Endothelial cell of umbilical vein (primary cell): ENCODE measurements at regions of chr3 and their contacts with region 1.

Region 1: GRCh38 chr3:184874709-184875644 is 63.0 kb downstream of the VPS8 start:
- DNase-seq: peak; percentile 52
- H3K4me3 ChIP-seq: no peak overlapping the region
- H3K27ac ChIP-seq: no peak overlapping the region
- H3K4me1 ChIP-seq: no peaks in the 10 kb centered on the region
- H3K27me3 ChIP-seq: no peaks in the 10 kb centered on the region
- CTCF ChIP-seq: peak; percentile 36 to 40
- POLR2A ChIP-seq: no peak

Region 2: GRCh38 chr3:184568924-184569829 is 305.8 kb before region 1 on chr3:
- CTCF ChIA-PET with region 1: no interaction called
- POLR2A ChIA-PET with region 1: no interaction called
- dilution Hi-C with region 1: no loop called
- intact Hi-C with region 1: no loop called
- DNase-seq: peak; percentile 14
- H3K4me3 ChIP-seq: peak overlapping the region in 2 of 3 experiments; percentile 19 to 26
- H3K27ac ChIP-seq: no peak overlapping the region
- H3K4me1 ChIP-seq: no peaks in the 10 kb centered on the region
- H3K27me3 ChIP-seq: peaks cover 21 to 31% of the 10 kb centered on the region in 2 experiments
- CTCF ChIP-seq: no peak
- POLR2A ChIP-seq: no peak

Region 3: GRCh38 chr3:184965639-184966430 is 90.9 kb after region 1 on chr3:
- CTCF ChIA-PET with region 1: no interaction called
- POLR2A ChIA-PET with region 1: no interaction called
- dilution Hi-C with region 1: no loop called
- intact Hi-C with region 1: no loop called
- DNase-seq: no peak
- H3K4me3 ChIP-seq: no peak overlapping the region
- H3K27ac ChIP-seq: no peak overlapping the region
- H3K4me1 ChIP-seq: no peaks in the 10 kb centered on the region
- H3K27me3 ChIP-seq: no peaks in the 10 kb centered on the region
- CTCF ChIP-seq: no peak
- POLR2A ChIP-seq: no peak

Region 4: DNA sequence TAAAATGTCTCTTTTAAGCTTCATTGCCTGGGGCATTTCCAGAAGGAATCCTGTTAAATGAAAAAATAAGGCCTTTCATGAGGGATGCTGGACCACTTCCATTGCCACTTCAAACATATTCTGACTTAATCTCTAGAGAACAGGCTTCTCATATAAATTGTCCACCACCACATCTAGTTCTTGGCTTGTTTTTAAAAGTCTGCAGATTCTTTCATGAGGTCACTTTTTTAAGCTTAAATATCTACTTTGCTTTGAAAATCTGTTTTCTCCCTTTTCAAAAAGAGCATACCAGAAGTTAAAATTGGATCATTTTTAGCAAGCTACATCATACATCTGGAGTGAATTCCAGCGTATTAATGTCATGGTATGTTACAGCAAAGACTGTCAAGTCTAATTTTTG is 146.3 kb after region 1 on chr3:
- CTCF ChIA-PET with region 1: no interaction called
- POLR2A ChIA-PET with region 1: no interaction called
- dilution Hi-C with region 1: no loop called
- intact Hi-C with region 1: loop called (anchors 5 kb)
- DNase-seq: no peak
- H3K4me3 ChIP-seq: no peak overlapping the region
- H3K27ac ChIP-seq: no peak overlapping the region
- H3K4me1 ChIP-seq: peaks cover 4% of the 10 kb centered on the region
- H3K27me3 ChIP-seq: no peaks in the 10 kb centered on the region
- CTCF ChIP-seq: no peak
- POLR2A ChIP-seq: no peak

Region 5: GRCh38 chr3:185070491-185071286 is 195.7 kb after region 1 on chr3:
- CTCF ChIA-PET with region 1: interaction called, 30 read pairs
- POLR2A ChIA-PET with region 1: no interaction called
- dilution Hi-C with region 1: no loop called
- intact Hi-C with region 1: loop called (anchors 1 kb)
- DNase-seq: peak; percentile 18
- H3K4me3 ChIP-seq: no peak overlapping the region
- H3K27ac ChIP-seq: no peak overlapping the region
- H3K4me1 ChIP-seq: no peaks in the 10 kb centered on the region
- H3K27me3 ChIP-seq: no peaks in the 10 kb centered on the region
- CTCF ChIP-seq: peak; percentile 29 to 55
- POLR2A ChIP-seq: no peak

Region 6: DNA sequence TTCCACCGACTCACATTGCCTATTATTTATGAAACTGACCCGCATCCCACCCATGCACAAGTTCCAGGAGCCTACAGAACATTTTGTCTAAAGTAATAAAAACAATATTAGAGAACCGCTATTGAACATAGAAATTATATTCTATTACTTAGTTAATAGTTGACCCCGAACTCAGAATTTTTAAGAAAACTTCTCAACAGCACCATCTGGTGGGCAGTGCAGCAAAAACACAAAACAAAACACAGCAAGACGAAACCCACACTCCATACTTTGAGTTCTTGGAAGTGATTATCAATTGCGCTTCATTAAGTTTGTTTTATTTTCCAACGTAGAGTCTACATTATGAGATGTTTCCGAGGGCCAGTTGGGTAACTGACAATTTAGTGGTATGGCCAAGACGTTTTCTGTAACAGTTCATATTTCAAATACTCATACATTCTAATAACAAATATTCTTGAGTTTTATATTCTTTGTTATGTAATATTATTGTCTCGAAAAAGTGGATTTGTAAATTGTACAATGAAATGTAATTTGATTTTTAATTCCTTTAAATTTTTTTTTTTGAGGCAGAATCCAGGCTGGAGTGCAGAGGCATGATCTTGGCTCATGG is 301.9 kb after region 1 on chr3:
- CTCF ChIA-PET with region 1: interaction called, 121 read pairs
- POLR2A ChIA-PET with region 1: no interaction called
- dilution Hi-C with region 1: loop called (anchors 25 kb)
- intact Hi-C with region 1: loop called (anchors 1 kb)
- DNase-seq: peak; percentile 48
- H3K4me3 ChIP-seq: no peak overlapping the region
- H3K27ac ChIP-seq: no peak overlapping the region
- H3K4me1 ChIP-seq: no peaks in the 10 kb centered on the region
- H3K27me3 ChIP-seq: peaks cover 3 to 5% of the 10 kb centered on the region in 2 experiments
- CTCF ChIP-seq: peak; percentile 46 to 60
- POLR2A ChIP-seq: no peak

Region 7: DNA sequence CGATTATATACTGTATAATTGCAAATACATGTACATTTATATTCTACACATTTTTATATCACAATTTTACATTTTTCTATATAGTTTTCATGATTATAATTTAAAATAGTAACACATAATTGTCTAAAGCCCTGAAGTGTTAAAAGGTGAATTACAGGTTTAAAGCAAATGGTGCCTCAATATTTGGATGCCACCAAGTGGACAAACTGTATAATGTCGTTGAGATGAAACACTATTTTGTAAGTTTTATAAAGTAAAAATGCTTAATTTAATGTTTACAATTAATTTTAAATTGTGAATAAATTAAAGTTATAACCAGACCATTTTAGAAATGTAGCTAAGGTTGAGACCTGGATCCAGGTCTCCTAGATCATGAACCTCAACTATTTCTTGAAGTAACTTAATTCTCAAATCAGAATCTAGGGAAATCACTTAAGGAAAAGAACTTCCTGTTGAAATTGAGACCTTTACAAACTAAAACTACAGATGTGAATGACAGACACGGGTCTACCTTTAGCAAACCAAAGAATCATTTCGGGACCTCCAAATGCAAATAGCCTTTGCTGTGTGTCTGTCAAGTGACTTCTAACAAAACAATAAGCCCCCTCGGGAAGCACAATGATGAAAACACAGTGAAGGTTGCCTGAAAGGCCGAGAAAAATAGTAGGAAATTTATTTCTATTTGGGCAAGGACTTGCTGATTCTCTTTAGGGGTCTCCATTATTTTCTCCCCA is 341.1 kb after region 1 on chr3:
- CTCF ChIA-PET with region 1: no interaction called
- POLR2A ChIA-PET with region 1: interaction called, 4 read pairs
- dilution Hi-C with region 1: no loop called
- intact Hi-C with region 1: loop called (anchors 1 kb)
- DNase-seq: peak; percentile 55
- H3K4me3 ChIP-seq: peak overlapping the region in 2 of 3 experiments; percentile 4 to 27
- H3K27ac ChIP-seq: no peak overlapping the region
- H3K4me1 ChIP-seq: peaks cover 6% of the 10 kb centered on the region
- H3K27me3 ChIP-seq: no peaks in the 10 kb centered on the region
- CTCF ChIP-seq: peak; percentile 19 to 27
- POLR2A ChIP-seq: no peak

Region 8: DNA sequence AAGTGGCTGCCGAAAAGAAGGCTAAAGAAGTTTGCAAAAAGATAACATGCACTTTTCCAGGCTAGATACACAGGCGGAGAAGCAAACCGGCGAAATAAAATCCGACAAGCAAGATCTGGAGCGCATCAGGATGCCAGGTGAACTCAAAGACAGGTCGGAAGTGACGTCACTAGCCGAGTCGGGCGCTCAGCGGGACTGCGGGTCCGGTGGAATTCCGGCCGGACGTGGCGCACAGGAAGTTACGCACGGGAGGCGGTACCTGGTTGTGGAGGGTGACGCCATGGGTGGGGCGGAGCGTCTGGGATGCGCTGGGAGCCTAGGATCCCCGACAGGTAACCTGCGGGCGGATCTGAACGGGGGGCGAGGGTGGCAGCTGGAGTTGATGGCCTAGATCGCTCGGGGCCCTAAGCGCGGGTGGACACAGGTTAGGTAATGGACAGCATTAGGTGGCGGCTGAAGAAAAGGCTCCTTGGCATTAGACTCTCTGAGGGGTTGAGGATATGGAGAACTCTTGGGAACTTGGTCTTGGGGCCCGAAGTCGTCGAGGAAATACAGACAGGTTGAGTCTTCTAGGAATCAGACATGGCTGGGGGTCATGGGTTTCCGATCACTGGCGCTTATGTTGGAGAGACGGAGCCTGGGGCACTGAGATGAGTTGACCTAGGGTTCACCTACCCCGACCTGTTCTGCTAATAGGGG is 407.9 kb after region 1 on chr3:
- CTCF ChIA-PET with region 1: interaction called, 6 read pairs
- POLR2A ChIA-PET with region 1: no interaction called
- dilution Hi-C with region 1: no loop called
- intact Hi-C with region 1: loop called (anchors 1 kb)
- DNase-seq: peak; percentile 88
- H3K4me3 ChIP-seq: peak overlapping the region; percentile 41 to 77 (median 57)
- H3K27ac ChIP-seq: peak overlapping the region; percentile 54
- H3K4me1 ChIP-seq: peaks cover 9% of the 10 kb centered on the region
- H3K27me3 ChIP-seq: peaks cover 0 to 2% of the 10 kb centered on the region in 2 experiments
- CTCF ChIP-seq: no peak
- POLR2A ChIP-seq: peak; percentile 70

Region 9: DNA sequence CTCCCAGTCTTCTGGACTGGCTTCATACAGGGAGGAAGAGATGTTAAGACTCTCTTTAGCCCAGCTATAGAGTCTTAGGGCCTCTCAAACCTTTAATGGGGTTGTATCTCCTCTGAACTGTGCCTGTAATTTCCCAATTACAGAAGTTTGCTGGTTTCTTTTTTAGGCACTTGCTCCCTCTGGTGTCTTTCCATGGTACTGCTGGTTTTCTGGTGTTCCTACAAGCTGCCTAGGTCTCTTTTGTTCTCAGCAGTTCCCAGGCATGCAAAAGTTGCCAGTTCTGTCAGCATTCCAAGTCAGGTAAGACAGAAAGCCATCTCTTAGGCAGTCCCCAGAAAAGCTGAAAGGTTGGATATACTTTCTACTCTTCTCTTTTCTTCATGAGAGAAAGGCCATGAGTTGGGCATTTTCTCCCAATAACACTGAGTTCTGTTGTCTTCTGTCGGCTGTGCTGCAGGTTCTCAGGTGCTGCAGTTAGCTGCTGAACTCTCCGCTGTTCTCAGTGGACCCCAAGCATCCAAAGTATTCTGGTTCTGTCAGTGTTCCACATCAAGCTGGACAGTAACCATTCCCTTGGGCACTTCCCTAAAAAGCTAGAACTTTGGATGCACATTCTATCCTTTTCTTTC is 433.3 kb after region 1 on chr3:
- CTCF ChIA-PET with region 1: interaction called, 14 read pairs
- POLR2A ChIA-PET with region 1: no interaction called
- dilution Hi-C with region 1: no loop called
- intact Hi-C with region 1: loop called (anchors 1 kb)
- DNase-seq: peak; percentile 68
- H3K4me3 ChIP-seq: no peak overlapping the region
- H3K27ac ChIP-seq: no peak overlapping the region
- H3K4me1 ChIP-seq: no peaks in the 10 kb centered on the region
- H3K27me3 ChIP-seq: no peaks in the 10 kb centered on the region
- CTCF ChIP-seq: peak; percentile 64 to 77
- POLR2A ChIP-seq: no peak